ENCODE measurements at regions of chr3 and their contacts with region 1.

Region 1: DNA sequence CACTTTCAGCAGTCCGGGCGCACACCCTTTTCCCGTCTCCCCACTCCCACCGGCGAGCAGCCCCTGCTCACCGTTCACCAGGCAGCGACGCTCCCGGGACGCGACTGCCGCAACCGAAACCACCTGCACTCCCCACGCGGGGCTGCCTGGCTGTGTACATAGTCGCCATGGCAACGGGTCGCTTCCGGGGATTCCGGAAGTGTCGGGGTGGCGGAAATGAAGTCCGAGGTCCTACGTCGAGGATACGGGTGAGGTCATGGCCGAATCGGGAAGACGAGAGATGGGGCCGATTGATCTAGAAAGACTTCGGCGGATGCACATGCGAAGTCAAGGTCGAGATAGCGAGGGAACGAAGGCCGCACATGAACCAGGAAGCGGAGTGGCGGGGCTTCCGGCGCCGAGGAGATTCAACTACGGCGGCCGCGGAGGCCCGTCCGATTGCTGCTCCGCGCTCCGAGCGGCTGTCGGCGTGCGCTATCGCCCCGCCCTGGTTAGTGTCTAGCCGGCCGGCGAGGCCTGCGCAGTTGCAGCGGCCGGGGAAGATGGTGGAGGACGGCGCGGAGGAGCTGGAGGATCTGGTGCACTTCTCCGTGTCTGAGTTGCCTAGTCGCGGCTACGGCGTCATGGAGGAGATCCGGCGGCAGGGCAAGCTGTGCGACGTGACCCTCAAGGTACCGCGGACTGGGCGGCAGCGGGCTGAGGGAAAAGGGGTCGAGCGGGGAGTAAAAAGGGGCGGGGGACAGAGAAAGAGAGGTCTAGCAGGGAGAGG is at the starts of genes KIF9 and KLHL18:
- DNase-seq: peak; percentile 94 to 96
- ATAC-seq: peak; percentile 97 to 98 (median 98)
- H3K4me3 ChIP-seq: peak within 1 kb of the TSS; percentile 97
- H3K27ac ChIP-seq: peak within 1 kb of the TSS; percentile 97
- H3K4me1 ChIP-seq: peaks cover 34% of the 10 kb centered on the region
- H3K27me3 ChIP-seq: no peaks in the 10 kb centered on the region
- CTCF ChIP-seq: no peak
- total RNA-seq, gene KIF9: 3.5 to 5.9 (median 4.4) TPM
- total RNA-seq, gene KLHL18: 44.2 to 68.7 (median 53.8) TPM

Region 2: GRCh38 chr3:47164007-47164881 is 118.4 kb before region 1 on chr3 and contains the start of gene SETD2:
- intact Hi-C with region 1: loop called in 1 of 2 experiments (anchors 5 kb)
- DNase-seq: peak; percentile 97 to 99
- ATAC-seq: peak; percentile 95 to 96 (median 96)
- H3K4me3 ChIP-seq: peak within 1 kb of the TSS; percentile 94
- H3K27ac ChIP-seq: peak within 1 kb of the TSS; percentile 96
- H3K4me1 ChIP-seq: peaks cover 45% of the 10 kb centered on the region
- H3K27me3 ChIP-seq: no peaks in the 10 kb centered on the region
- CTCF ChIP-seq: no peak
- total RNA-seq, gene SETD2: 33.7 to 38.1 (median 36.6) TPM

Region 3: GRCh38 chr3:47243419-47244147 is 39.0 kb before region 1 on chr3:
- intact Hi-C with region 1: no loop called
- DNase-seq: no peak
- ATAC-seq: no peak
- H3K4me3 ChIP-seq: no peak overlapping the region
- H3K27ac ChIP-seq: no peak overlapping the region
- H3K4me1 ChIP-seq: no peaks in the 10 kb centered on the region
- H3K27me3 ChIP-seq: no peaks in the 10 kb centered on the region
- CTCF ChIP-seq: no peak